ENCODE measurements at regions of chr10 and their contacts with region 1.

Region 1: DNA sequence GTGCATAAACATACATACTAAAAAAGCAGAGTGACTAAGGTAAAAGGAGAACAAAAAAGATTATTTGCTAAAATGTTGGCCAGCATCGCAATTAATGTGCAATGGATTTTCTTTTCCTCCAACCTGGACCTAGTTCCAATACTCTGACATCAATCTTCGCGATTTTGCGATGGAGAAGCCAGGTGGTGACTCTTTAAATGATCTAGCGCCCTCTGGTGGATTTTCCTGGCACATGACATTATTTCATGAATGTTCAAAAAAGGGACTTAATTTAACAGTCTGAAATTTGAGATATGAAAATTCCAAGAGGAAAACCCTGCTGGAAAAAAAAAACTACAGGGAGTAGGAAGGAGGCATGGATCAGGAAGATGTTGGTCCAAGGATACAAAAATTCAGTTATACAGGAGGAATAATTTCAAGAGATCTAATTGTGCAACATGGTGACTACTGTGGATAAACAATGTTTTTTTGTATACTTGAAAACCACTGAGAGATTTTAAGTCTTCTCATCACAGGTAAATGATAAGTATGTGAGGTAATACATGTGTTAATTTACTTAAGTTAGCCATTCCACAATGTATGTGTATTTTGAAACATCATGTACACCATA is 4.3 kb upstream of the KCNMA1 start:
- DNase-seq: no peak
- H3K4me3 ChIP-seq: no peak overlapping the region
- H3K27ac ChIP-seq: peak overlapping the region in 1 of 8 donors; percentile 48
- H3K4me1 ChIP-seq: peaks cover 5 to 34% (median 25%) of the 10 kb centered on the region in 6 donors
- H3K27me3 ChIP-seq: peaks cover 2 to 78% (median 38%) of the 10 kb centered on the region in 7 donors
- CTCF ChIP-seq: peak; percentile 35 to 90 (median 80)
- POLR2A ChIP-seq: no peak

Region 2: GRCh38 chr10:77165445-77166208 is 476.3 kb before region 1 on chr10:
- intact Hi-C with region 1: loop called (anchors 2 kb)
- DNase-seq: no peak
- H3K4me3 ChIP-seq: no peak overlapping the region
- H3K27ac ChIP-seq: peak overlapping the region in 1 of 8 donors; percentile 22
- H3K4me1 ChIP-seq: peaks cover 0 to 7% (median 0%) of the 10 kb centered on the region in 6 donors
- H3K27me3 ChIP-seq: no peaks in the 10 kb centered on the region
- CTCF ChIP-seq: peak; percentile 29 to 86 (median 70)
- POLR2A ChIP-seq: no peak

Region 3: DNA sequence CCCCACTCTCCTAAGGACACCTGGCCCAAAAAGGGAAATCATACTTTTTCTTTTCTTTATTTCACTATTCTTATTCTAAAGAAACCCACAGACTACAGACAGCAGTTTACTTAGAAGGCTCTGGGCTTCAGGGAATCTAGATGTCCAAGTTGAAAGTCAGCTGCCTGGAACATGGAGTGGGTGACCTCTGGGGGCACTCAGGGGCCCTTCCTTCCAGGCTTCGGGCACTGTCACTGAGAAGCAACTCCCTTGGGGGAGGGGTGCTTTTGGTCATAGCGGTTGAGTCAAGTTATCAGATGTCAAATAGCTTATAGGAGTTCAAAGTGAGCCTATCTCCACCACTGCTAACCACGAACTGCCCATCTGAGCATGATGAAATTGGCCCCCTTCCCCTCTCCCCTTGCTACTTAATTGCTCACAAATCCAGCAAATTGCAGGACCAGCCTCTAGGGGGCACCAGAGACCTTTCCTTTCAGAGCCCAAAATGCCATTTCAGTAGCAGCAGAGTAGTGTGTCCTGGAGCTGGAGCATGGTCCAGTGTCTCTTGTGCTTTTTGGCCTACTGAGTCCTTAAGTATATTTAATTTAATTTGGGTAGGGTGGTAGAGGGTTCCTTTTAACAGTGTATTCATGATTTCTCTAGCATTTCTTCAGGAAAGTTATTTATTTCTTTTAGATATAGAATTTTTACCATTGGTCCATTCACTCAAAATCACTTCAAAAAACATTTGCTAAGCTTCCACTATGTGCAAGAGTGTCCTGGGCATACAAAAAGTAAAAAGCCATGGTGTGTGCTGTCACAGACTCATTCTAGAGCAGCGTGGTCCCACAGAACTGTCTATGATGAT is 468.1 kb before region 1 on chr10:
- intact Hi-C with region 1: loop called (anchors 2 kb)
- DNase-seq: peak; percentile 81
- H3K4me3 ChIP-seq: no peak overlapping the region
- H3K27ac ChIP-seq: no peak overlapping the region
- H3K4me1 ChIP-seq: peaks cover 0 to 4% (median 0%) of the 10 kb centered on the region in 6 donors
- H3K27me3 ChIP-seq: peaks cover 0 to 13% (median 0%) of the 10 kb centered on the region in 7 donors
- CTCF ChIP-seq: peak; percentile 67 to 89 (median 81)
- POLR2A ChIP-seq: no peak

Region 4: GRCh38 chr10:77251297-77252013 is 390.4 kb before region 1 on chr10:
- intact Hi-C with region 1: loop called (anchors 5 kb)
- DNase-seq: no peak
- H3K4me3 ChIP-seq: no peak overlapping the region
- H3K27ac ChIP-seq: no peak overlapping the region
- H3K4me1 ChIP-seq: peaks cover 3 to 11% (median 5%) of the 10 kb centered on the region in 6 donors
- H3K27me3 ChIP-seq: no peaks in the 10 kb centered on the region
- CTCF ChIP-seq: peak in 8 of 11 experiments; percentile 22 to 62 (median 46)
- POLR2A ChIP-seq: no peak

Region 5: DNA sequence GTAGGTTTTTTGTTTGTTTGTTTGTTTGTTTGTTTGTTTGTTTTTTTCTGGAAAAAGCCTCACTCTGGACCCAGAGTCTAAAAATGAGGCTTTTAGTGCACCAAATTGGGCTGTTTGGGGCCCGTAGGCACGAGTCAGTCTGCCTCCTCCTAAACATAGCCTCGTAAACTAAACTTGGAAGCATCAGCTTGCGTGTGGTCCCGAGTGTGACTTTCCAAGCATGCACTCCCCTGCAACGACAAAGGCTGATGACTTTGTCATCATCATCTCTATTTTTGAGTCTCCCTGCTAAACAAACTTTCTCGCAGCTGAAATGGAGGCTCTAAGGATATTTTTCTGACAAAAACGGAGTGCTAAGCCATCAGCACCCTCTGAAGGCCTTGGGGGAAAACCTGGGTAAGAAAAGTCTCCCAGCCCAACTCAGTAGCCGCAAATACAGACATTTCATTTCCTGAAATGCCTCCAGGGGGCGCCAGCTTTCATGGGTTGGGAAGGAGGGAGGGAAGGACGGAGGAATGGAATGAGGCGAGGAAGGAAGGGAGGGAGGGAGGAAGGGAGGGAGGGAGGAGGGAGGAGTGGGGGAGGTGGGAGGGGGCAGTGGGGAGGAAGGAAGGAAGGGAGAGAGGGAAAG is 250.2 kb before region 1 on chr10:
- intact Hi-C with region 1: loop called (anchors 5 kb)
- DNase-seq: no peak
- H3K4me3 ChIP-seq: no peak overlapping the region
- H3K27ac ChIP-seq: no peak overlapping the region
- H3K4me1 ChIP-seq: peaks cover 0 to 19% (median 9%) of the 10 kb centered on the region in 6 donors
- H3K27me3 ChIP-seq: peaks cover 0 to 47% (median 10%) of the 10 kb centered on the region in 7 donors
- CTCF ChIP-seq: peak in 8 of 11 experiments; percentile 18 to 65 (median 49)
- POLR2A ChIP-seq: no peak

Region 6: DNA sequence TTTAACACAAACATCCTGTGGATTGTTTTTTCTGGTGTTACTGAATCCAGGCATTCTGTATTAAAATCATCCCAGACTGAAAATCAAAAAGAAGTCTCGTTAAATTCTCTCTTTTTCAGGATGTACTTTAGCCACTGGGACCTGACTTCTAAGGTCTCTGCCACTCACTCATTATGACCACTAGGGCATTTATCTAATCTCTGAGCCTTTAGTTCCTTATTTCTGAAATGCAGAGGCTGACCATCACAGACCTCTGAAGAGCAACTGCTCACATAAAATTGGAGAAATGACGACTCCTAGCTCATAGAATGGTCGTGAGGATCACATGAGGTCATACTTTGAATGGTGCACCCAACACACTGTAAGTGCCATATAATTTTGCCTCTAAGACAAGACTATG is 67.5 kb before region 1 on chr10:
- intact Hi-C with region 1: no loop called
- DNase-seq: no peak
- H3K4me3 ChIP-seq: no peak overlapping the region
- H3K27ac ChIP-seq: no peak overlapping the region
- H3K4me1 ChIP-seq: no peaks in the 10 kb centered on the region
- H3K27me3 ChIP-seq: no peaks in the 10 kb centered on the region
- CTCF ChIP-seq: peak in 1 of 11 experiments; percentile 7
- POLR2A ChIP-seq: no peak

Region 7: DNA sequence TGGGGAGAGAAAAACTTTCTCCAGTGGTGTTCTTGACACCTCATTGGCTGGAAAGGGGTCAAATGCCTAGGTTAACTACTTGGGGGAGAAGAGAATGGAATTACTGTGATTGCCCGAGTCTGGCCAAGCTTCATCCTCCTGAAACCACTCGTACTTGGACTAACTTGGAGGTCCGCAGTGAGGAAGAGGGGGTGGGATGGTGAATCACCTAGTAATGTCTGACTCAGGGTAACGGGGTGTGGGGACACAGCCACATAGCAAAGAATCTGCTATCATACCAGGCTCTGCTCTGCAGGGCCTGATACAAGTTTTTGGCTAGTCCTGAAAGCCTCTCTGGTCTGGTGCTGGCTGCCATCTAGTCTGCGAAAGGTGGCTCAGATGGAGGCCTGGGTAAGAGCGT is 582.7 kb after region 1 on chr10:
- intact Hi-C with region 1: no loop called
- DNase-seq: no peak
- H3K4me3 ChIP-seq: no peak overlapping the region
- H3K27ac ChIP-seq: no peak overlapping the region
- H3K4me1 ChIP-seq: no peaks in the 10 kb centered on the region
- H3K27me3 ChIP-seq: no peaks in the 10 kb centered on the region
- CTCF ChIP-seq: no peak
- POLR2A ChIP-seq: no peak

Measured in spleen (tissue), 13 donors.